ENCODE measurements at regions of chr12 and their contacts with region 1.

Region 1: GRCh38 chr12:66169221-66170170 is at the start of gene TMBIM4:
- DNase-seq: peak; percentile 80 to 92 (median 86)
- H3K4me3 ChIP-seq: peak within 1 kb of the TSS; percentile 97
- H3K4me3 Mint-ChIP-seq: peak within 1 kb of the TSS; percentile 93 to 98 (median 97)
- H3K27ac ChIP-seq: peak within 1 kb of the TSS; percentile 98
- H3K27ac Mint-ChIP-seq: peak within 1 kb of the TSS; percentile 93 to 100 (median 98)
- H3K4me1 ChIP-seq: peaks cover 21% of the 10 kb centered on the region
- H3K4me1 Mint-ChIP-seq: peaks cover 44 to 58% (median 57%) of the 10 kb centered on the region in 3 donors
- H3K27me3 ChIP-seq: no peaks in the 10 kb centered on the region
- H3K27me3 Mint-ChIP-seq: peaks cover 0 to 5% of the 10 kb centered on the region in 2 donors
- total RNA-seq, gene TMBIM4: 59.8 to 60.0 TPM

Region 2: DNA sequence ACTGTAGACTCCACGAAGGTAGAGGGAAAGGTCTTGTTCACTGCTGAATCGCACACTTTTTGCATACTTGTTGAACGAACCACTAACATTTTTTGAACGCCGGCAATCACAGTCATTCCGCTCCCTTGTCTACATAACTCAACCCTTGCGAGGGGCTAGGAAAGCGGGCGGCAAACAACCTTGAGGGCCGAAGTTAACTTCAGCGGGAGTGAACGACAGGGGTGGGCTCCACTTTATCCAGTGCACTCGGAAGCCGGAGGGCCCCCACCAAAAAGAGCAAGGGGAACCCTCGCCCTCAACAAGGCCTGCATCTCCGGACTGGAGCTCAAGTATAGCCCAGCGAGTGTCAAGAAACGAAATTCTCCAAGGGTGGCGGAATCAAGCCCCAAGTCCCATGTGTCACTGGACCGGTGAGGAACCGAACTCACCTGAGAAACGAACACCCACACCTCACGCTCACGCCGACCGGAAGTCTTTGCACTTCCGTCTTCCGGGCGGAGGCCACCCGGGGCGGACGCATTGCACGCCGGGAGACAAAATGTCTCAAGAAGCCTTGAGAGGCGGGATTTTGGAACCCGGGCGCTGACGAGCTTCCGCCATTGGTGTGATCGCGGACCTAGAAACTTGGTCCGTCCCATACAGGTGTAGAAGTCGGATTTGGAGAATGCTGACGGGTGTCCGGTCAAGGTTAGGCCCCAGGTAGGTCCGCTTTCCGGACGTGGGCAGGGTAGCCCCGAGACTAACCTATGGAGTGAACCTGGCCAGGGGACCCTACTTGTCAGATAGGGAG is 39.0 kb before region 1 on chr12 and contains the start of gene LLPH:
- CTCF ChIA-PET with region 1: interaction called, 17 read pairs
- POLR2A ChIA-PET with region 1: interaction called, 48 read pairs
- DNase-seq: peak; percentile 77 to 92 (median 84)
- H3K4me3 ChIP-seq: peak within 1 kb of the TSS; percentile 97
- H3K4me3 Mint-ChIP-seq: peak within 1 kb of the TSS; percentile 93 to 99 (median 97)
- H3K27ac ChIP-seq: peak within 1 kb of the TSS; percentile 79
- H3K27ac Mint-ChIP-seq: peak within 1 kb of the TSS; percentile 95 to 99 (median 98)
- H3K4me1 ChIP-seq: peaks cover 25% of the 10 kb centered on the region
- H3K4me1 Mint-ChIP-seq: peaks cover 53 to 67% (median 64%) of the 10 kb centered on the region in 3 donors
- H3K27me3 ChIP-seq: no peaks in the 10 kb centered on the region
- H3K27me3 Mint-ChIP-seq: peaks cover 0 to 3% of the 10 kb centered on the region in 2 donors
- total RNA-seq, gene LLPH: 45.7 to 47.7 TPM

Measured in CD8-positive, alpha-beta memory T cell (primary cell).